Activated CD8-positive, alpha-beta T cell treated with anti-CD3 and anti-CD28 coated beads for 36 hours (primary cell): ENCODE measurements at regions of chr13 and their contacts with region 1.

Region 1: GRCh38 chr13:99214232-99214631 is 13.6 kb downstream of the UBAC2 start:
- DNase-seq: peak; percentile 84
- ATAC-seq: peak; percentile 72
- H3K4me3 Mint-ChIP-seq: peak overlapping the region; percentile 74
- H3K27ac Mint-ChIP-seq: peak overlapping the region; percentile 91
- H3K4me1 Mint-ChIP-seq: peaks cover 80% of the 10 kb centered on the region
- H3K27me3 Mint-ChIP-seq: no peaks in the 10 kb centered on the region
- CTCF ChIP-seq: no peak

Region 2: GRCh38 chr13:99133230-99133629 is 81.0 kb before region 1 on chr13:
- CTCF ChIA-PET with region 1: no interaction called
- POLR2A ChIA-PET with region 1: no interaction called
- intact Hi-C with region 1: no loop called
- DNase-seq: no peak
- ATAC-seq: no peak
- H3K4me3 Mint-ChIP-seq: no peak overlapping the region
- H3K27ac Mint-ChIP-seq: no peak overlapping the region
- H3K4me1 Mint-ChIP-seq: no peaks in the 10 kb centered on the region
- H3K27me3 Mint-ChIP-seq: no peaks in the 10 kb centered on the region
- CTCF ChIP-seq: no peak

Region 3: DNA sequence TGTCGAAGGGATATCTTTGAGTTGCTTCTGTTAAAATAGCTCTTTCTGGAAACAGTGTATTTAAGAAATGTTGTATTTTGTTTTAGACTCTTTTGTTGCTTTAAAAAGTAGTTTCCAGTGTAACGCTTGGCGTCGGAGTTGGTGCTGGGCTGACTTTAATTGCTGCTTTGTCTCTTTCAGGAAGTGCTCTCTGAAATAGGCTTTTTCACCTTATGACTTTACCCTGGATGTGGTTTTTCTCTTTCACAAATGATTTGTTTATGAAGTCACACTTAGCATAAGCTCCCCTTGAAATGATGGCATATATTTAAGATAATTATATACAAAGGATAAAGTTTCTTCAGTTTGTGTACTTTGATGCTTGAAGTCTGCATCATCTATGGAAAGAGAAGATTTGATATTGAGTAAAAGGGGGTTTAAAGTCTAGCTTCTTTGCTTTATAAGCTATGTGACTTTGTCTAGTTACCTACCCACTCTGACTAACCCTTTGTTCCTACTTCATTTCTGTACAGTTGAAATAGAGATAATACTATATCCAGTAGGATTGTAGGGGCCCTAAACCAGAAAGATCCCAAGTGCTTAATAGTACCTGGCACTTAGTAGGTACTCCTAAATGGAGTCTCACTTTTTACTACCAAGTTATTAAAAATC is 44.1 kb after region 1 on chr13 and contains the start of gene GPR18:
- CTCF ChIA-PET with region 1: interaction called, 4 read pairs
- POLR2A ChIA-PET with region 1: interaction called, 7 read pairs
- intact Hi-C with region 1: loop called (anchors 5 kb)
- DNase-seq: peak; percentile 66
- ATAC-seq: peak; percentile 74
- H3K4me3 Mint-ChIP-seq: peak within 1 kb of the TSS; percentile 84
- H3K27ac Mint-ChIP-seq: peak within 1 kb of the TSS; percentile 98
- H3K4me1 Mint-ChIP-seq: peaks cover 66% of the 10 kb centered on the region
- H3K27me3 Mint-ChIP-seq: no peaks in the 10 kb centered on the region
- CTCF ChIP-seq: no peak
- total RNA-seq, gene GPR18: 11.4 to 11.6 TPM